Dorsolateral prefrontal cortex (tissue), 120 donors: ENCODE measurements at regions of chr5 and their contacts with region 1.

Region 1: GRCh38 chr5:140564196-140565023 is at the starts of genes APBB3 and SLC35A4:
- DNase-seq: peak; percentile 93 to 99 (median 98)
- H3K4me3 ChIP-seq: peak within 1 kb of the TSS; percentile 61 to 98 (median 88)
- H3K27ac ChIP-seq: peak within 1 kb of the TSS; percentile 78 to 98 (median 95)
- H3K27me3 ChIP-seq: no peaks in the 10 kb centered on the region
- CTCF ChIP-seq: peak in 29 of 56 donors; percentile 3 to 62 (median 24)
- total RNA-seq, gene APBB3: 34.6 to 98.7 (median 58.4) TPM
- total RNA-seq, gene SLC35A4: 23.5 to 50.7 (median 34.7) TPM

Region 2: DNA sequence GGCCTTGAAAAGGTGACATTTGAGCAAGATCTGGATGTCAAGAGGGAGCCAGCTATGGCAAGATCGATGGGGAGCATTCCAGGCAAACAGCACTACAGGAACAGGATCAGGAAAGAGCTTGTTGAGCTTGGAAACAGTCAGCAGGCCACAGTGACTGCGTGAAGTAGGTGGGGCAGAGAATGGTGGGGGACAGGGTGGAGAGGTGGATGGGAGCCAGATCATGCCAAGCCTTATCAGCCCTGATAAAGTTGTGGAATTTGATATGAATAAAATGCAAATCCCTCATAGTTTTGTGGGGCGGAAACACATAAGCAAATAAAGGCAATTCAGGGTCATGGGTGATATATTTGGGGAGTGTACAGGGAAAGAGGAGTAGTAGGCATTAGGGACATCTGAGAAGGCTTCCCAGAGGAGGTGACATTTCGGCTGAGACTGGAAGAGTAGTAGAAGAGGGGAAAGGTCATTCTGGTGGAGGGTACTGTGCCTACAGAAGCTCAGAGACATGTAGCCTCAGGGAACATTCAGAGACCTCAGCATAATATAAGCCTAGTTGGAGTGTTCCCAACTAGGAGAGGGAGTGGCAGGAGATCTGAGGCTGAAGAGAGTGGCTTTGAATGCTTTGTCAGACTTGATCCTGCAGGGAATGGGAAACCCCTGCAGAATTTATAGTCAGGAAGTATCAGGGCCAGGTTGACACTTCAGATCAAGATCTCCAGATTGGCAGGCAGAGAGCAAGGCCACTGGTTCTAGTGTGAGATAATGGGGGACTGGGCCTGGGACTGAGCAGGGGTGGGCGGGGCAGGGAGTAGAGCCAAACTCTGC is 399.1 kb before region 1 on chr5:
- intact Hi-C with region 1: no loop called
- DNase-seq: no peak
- H3K4me3 ChIP-seq: no peak overlapping the region
- H3K27ac ChIP-seq: peak overlapping the region in 1 of 59 donors; percentile 14
- H3K27me3 ChIP-seq: no peaks in the 10 kb centered on the region
- CTCF ChIP-seq: no peak

Region 3: GRCh38 chr5:140547508-140548299 is 16.7 kb before region 1 on chr5 and contains the start of gene EIF4EBP3:
- intact Hi-C with region 1: loop called in 1 of 2 experiments (anchors 2 kb)
- DNase-seq: peak; percentile 93 to 98 (median 97)
- H3K4me3 ChIP-seq: peak within 1 kb of the TSS; percentile 27 to 93 (median 59)
- H3K27ac ChIP-seq: peak within 1 kb of the TSS; percentile 53 to 97 (median 89)
- H3K27me3 ChIP-seq: no peaks in the 10 kb centered on the region
- CTCF ChIP-seq: peak in 52 of 56 donors; percentile 22 to 71 (median 52)
- total RNA-seq, gene EIF4EBP3: 1.2 to 16.5 (median 5.9) TPM

Region 4: GRCh38 chr5:140609126-140609525 is 44.7 kb after region 1 on chr5:
- intact Hi-C with region 1: no loop called
- DNase-seq: peak in 5 of 10 donors; percentile 30 to 56 (median 43)
- H3K4me3 ChIP-seq: no peak overlapping the region
- H3K27ac ChIP-seq: peak overlapping the region in 28 of 59 donors; percentile 3 to 72 (median 32)
- H3K27me3 ChIP-seq: no peaks in the 10 kb centered on the region
- CTCF ChIP-seq: no peak

Region 5: DNA sequence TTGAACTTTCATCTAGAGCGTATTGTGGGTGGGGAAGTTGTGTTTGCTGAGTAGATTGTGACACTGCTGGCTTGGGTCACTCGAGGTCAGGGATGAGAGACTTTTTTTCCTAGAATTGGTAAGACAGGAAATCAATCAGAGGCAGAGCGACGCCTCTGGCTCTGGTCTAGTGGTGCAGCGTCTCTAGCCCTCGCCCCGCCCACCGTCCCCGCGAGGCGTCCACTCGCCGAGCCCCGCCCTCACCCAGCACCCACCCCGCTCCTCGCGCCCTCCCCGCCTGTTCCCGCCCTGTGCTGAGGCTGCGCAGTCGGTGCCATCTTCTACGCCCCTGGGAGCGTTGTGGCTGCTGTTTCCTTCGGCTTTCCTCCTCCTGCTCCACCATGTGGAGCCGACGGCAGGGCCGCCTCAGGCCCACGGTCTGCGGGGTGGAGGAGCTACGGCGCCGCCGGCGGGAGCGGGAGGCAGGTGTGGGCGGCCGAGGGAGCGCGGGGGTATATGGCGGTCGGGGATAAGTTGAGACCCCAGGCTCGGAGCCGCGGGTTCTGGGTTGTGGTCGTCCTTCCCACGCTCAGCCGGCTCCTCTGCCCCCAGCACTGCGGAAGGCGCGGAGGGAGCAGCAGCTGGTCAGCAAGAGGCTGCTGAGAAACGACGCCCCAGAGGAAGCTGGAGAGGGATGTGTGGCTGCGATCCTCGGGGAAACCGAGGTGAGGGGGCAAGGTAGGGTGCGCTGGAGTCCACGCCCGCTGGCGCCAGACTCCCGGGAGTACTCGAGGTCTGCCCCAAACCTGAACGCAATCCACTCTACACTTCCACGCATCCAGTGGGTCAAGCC is 75.0 kb after region 1 on chr5 and contains the start of gene TMCO6:
- intact Hi-C with region 1: loop called (anchors 2 to 5 kb)
- DNase-seq: peak; percentile 94 to 98 (median 96)
- H3K4me3 ChIP-seq: peak within 1 kb of the TSS; percentile 51 to 96 (median 83)
- H3K27ac ChIP-seq: peak within 1 kb of the TSS; percentile 63 to 97 (median 90)
- H3K27me3 ChIP-seq: no peaks in the 10 kb centered on the region
- CTCF ChIP-seq: peak; percentile 35 to 86 (median 73)
- total RNA-seq, gene TMCO6: 5.4 to 18.1 (median 10.8) TPM

Region 6: DNA sequence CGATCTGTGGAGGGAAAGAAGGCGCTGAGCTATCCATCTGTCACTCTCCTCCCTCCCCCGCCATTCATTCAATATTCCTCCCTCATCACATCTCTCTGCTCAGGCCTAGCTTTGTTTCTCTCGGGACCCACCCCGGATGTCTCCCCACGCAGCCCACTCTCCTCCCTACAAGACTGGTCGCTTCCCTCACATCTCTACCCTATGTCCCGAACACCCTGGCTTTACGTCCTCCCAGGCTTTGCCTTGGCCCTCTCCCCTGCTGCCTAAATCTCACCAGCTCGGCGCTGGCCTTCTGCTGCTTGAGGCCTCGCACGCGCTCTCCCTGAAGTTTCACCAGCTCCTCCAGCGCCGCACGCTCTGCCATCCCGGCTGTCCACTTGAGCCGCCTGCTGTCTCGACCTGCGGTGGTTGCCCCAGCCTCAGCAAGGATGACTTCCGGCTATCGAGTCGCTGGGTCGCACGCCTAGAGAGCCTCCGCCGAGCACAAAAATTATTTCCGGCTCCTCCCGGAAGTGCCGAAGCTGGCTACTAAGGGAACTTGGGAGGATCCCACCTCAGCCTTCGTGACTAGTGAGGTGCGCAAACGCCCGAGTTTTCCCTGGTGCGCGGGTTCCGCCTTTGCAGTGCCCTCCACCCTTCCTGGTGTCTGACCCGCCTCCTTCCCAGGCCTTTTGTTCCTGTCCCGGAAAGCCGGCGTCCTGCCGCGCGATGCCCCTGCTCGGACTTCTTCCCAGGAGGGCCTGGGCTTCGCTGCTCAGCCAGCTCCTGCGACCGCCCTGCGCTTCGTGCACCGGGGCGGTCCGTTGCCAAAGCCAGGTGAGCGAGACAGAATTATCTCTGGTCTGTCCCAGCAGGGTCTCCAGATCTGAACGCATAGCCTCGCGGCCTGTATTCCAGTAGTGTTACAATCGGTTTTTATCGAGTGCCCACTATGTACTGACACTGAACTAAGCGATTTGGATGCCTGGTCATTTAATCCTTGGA is 126.8 kb after region 1 on chr5 and contains the starts of genes HARS1 and HARS2:
- intact Hi-C with region 1: loop called (anchors 5 kb)
- DNase-seq: peak; percentile 84 to 96 (median 94)
- H3K4me3 ChIP-seq: peak within 1 kb of the TSS; percentile 69 to 100 (median 91)
- H3K27ac ChIP-seq: peak within 1 kb of the TSS in 58 of 59 donors; percentile 29 to 93 (median 82)
- H3K27me3 ChIP-seq: no peaks in the 10 kb centered on the region
- CTCF ChIP-seq: peak in 36 of 56 donors; percentile 4 to 53 (median 30)
- total RNA-seq, gene HARS1: 57.9 to 134 (median 105) TPM
- total RNA-seq, gene HARS2: 22.6 to 42.7 (median 32.0) TPM